ENCODE measurements at regions of chr14 and their contacts with region 1.

Region 1: GRCh38 chr14:102200690-102201352 is 61.1 kb downstream of the WDR20 start:
- DNase-seq: no peak
- H3K4me3 Mint-ChIP-seq: no peak overlapping the region
- H3K27ac Mint-ChIP-seq: peak overlapping the region; percentile 2
- H3K4me1 Mint-ChIP-seq: peaks cover 31% of the 10 kb centered on the region
- H3K27me3 Mint-ChIP-seq: no peaks in the 10 kb centered on the region

Region 2: GRCh38 chr14:102182190-102182589 is 18.6 kb before region 1 on chr14:
- intact Hi-C with region 1: loop called (anchors 1 kb)
- DNase-seq: no peak
- H3K4me3 Mint-ChIP-seq: no peak overlapping the region
- H3K27ac Mint-ChIP-seq: peak overlapping the region; percentile 68
- H3K4me1 Mint-ChIP-seq: peaks cover 50% of the 10 kb centered on the region
- H3K27me3 Mint-ChIP-seq: no peaks in the 10 kb centered on the region